PC-9 (cell line): ENCODE measurements at regions of chr11 and their contacts with region 1.

Region 1: DNA sequence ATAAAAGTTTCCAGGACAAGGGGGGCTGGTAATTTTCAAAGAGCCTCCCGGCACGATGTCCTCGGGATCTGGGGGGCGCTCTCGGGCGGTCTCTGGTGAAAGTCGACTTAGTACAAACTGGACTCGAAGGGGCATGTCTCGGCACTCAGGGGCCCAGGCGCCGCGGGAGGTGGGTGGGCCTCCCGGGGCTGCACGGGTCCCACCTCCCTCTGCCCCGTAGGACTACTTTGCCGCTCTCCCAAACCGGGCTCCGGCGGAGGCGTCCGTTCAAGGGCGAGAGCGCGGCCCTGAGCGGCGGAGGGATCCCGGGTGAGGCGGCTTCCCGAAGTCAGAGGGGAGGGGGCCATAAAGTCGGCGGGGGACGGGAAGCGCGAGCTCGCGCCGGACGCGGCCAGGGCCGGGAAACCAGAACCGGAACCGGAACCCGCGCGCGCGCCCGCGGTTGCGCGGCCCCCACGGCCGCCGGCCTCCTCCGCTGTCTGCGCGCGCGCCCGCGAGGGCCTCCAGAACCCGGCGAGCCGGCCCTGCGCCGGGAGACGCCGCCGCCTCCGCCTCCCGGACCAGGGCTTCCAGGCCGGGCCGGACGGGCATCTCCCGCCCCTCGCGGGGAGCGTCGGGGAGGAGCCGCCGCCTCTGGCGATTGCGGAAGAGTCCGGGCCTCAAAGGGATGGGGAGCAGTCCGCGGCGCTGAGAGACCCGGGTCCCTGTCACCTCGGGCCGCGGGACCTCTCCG is at the start of gene ARHGEF12:
- DNase-seq: peak; percentile 85 to 88
- H3K4me3 ChIP-seq: peak within 1 kb of the TSS; percentile 90
- H3K27ac ChIP-seq: peak within 1 kb of the TSS; percentile 50
- H3K4me1 ChIP-seq: peaks cover 76% of the 10 kb centered on the region
- H3K27me3 ChIP-seq: no peaks in the 10 kb centered on the region
- CTCF ChIP-seq: peak; percentile 44; the same call in 1 of the 2 replicates
- total RNA-seq, gene ARHGEF12: 61.5 and 76.5 TPM in 2 replicates

Region 2: GRCh38 chr11:119902656-119903231 is 433.3 kb before region 1 on chr11:
- CTCF ChIA-PET with region 1: no interaction called
- POLR2A ChIA-PET with region 1: no interaction called
- intact Hi-C with region 1: no loop called
- DNase-seq: no peak
- H3K4me3 ChIP-seq: no peak overlapping the region
- H3K27ac ChIP-seq: no peak overlapping the region
- H3K4me1 ChIP-seq: peaks cover 33% of the 10 kb centered on the region
- H3K27me3 ChIP-seq: no peaks in the 10 kb centered on the region
- CTCF ChIP-seq: no peak

Region 3: DNA sequence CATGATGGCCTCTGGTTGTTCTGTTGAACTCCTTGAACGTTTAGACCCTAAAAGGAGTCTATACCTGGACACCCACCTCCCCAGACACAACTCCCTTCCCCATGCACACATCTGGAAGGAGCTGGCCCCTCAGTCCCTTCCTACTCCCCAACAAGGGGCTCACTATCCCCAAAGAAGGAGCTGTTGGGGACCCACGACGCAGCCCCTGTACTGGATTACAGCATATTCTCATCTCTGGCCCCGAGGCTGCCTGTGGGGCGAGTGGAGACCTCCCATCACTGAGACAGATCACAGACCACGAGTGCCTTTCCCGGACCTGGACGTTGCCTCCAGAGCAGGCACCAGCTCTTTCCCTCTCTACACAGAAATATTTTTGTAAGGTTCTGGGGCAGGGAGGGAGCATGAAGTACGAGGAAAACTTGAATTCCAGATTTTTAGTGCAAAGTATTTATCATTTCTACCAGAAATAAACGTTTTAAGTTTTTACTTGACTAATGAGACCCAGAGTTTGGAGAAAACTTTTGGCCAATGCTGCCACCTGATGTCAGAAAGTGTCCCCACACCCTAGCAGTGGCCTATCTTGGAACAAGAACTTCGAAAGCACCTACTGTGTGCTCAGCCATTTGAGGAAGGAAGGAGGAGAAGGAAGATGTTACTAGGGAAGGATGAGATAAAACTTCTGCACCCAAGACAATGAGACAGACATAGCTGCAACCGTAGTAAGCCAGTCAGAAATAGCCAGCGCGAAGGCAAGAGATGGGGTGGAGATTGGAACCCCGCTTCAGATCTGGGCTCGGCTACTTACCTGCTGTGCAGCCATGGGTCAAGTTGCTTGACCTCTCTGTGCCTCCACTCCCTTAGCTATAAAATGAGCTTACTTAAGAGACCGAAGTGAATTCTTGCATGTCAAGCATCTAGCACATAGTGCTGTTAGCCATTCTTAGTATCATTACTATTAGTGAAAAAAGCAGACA is 106.3 kb before region 1 on chr11:
- CTCF ChIA-PET with region 1: no interaction called
- POLR2A ChIA-PET with region 1: no interaction called
- intact Hi-C with region 1: no loop called
- DNase-seq: no peak
- H3K4me3 ChIP-seq: no peak overlapping the region
- H3K27ac ChIP-seq: no peak overlapping the region
- H3K4me1 ChIP-seq: no peaks in the 10 kb centered on the region
- H3K27me3 ChIP-seq: no peaks in the 10 kb centered on the region
- CTCF ChIP-seq: peak; percentile 89

Region 4: DNA sequence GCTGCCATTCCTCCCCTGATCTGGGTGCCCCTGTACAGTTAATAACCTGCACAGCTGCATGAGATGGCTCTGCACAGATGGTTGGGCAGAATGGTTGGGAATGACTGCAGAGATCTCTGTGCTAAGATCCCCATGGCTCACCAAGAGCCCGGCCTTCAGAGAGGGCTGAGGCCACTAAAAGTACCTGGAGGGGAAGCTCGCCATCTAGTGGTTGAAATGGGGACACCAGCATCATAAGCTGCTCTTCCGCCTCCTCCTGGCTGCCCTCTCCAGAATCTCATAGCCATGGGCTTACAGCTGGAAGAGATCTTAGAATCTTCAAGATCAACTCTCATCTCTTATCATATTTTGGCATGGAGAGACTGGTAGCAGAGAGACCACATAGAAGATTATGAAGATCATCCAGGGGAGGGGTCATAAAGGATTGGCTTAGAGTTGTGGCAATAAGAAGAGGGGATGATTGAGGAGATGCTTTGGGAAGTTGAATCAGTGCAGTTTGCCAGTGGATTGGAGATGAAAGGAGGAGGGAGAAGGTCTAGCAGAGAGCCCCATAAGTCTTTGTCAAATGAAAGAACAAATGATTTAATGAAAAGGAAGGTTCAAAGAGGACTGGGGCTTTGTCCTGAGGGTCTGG is 33.0 kb before region 1 on chr11:
- CTCF ChIA-PET with region 1: interaction called, 3 read pairs
- POLR2A ChIA-PET with region 1: no interaction called
- intact Hi-C with region 1: loop called (anchors 1 kb)
- DNase-seq: peak in 1 of 2 experiments; percentile 67
- H3K4me3 ChIP-seq: no peak overlapping the region
- H3K27ac ChIP-seq: peak overlapping the region; percentile 77
- H3K4me1 ChIP-seq: peaks cover 78% of the 10 kb centered on the region
- H3K27me3 ChIP-seq: no peaks in the 10 kb centered on the region
- CTCF ChIP-seq: peak; percentile 87

Region 5: DNA sequence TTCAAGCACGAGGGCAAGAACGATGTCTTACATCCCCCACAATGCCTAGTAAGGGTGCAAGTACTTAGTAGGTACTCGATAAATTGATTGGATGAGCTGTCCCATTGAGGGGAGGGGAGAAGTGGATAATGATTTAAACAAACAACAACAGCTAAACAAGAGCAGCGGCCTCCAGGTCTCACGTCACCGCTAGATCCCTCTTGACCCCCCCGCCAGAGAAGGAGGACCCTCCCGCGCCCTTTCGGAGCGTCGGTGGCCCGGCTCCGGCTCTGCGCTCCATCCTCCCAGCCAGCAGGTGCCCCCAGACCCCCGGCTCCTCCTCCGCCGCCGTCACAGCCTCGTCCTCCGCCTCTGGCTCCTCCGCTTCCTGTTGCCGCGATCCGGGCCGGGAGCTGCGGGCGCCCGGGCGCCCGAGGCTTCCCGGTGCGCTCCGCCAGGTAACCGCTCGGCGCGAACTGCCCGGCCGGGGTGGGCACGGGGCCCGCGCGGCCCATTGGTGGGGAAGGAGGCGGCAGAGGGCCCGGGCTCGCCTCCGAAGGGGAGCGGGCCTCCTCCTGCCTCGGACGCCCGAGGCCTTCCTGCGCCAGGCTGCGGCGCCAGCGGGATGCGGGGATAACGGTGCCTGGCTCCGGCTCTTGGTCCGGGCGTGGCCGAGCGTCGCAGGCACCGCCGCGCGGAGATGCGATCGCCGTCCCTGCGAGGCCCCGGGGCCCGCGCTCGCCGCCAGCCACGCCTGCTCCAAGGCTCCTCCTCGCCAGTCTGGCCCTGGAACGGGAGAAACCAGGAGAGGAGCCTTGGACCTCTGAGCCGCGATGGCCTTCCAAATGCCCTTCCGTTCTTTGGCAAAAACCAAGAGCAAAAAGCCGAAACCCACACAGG is 10.9 kb before region 1 on chr11 and contains the start of gene TLCD5:
- CTCF ChIA-PET with region 1: interaction called, 10 read pairs
- POLR2A ChIA-PET with region 1: no interaction called
- intact Hi-C with region 1: no loop called
- DNase-seq: peak; percentile 44 to 63
- H3K4me3 ChIP-seq: peak within 1 kb of the TSS; percentile 79
- H3K27ac ChIP-seq: no peak within 1 kb of the TSS
- H3K4me1 ChIP-seq: peaks cover 21% of the 10 kb centered on the region
- H3K27me3 ChIP-seq: no peaks in the 10 kb centered on the region
- CTCF ChIP-seq: no peak
- total RNA-seq, gene TLCD5: 6.0 and 7.7 TPM in 2 replicates

Region 6: DNA sequence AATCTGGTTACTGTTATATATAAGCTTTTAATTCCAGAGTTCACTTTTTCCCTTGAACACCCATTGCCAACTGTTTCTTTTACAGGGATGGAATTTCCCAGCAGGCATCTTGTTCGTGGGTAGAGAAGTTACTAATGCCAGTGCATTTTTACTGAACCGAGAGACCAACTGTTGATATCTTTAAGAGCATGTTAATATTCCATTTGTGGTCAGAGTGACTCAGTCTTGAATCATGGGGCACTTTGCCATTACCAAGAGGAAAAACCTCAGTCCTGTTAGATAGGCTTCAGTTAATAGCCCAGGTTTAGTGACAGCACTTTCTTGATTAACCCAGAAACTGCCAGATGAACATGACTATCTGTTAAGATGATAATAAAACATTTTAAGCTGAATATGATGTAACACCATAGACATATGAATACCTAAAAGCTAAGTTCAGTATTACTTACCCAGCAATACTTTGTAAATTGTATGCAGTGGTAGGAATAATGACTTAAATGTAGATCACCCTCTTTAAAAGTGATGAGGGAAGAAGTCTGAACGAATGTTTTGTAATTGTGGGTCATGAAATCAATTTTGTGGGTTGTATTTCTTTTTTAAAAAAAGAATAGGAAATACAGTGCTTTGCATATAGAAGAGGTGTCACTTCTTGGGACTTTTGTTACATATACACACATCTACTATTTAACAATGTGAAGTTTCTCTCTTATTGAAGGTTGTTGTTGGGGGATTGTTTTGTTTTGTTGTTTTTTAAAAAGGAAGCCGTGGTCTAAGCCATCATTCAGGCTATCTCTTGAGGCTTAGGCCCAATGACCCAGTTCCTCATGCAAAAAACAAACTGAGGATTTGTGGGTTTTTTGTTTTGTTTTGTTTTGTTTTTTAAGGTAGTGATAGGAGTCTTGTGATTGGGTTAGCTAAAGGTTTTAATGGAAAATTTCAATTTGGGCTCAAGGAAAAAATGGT is 96.3 kb after region 1 on chr11:
- CTCF ChIA-PET with region 1: no interaction called
- POLR2A ChIA-PET with region 1: interaction called, 4 read pairs
- intact Hi-C with region 1: loop called (anchors 2 kb)
- DNase-seq: peak; percentile 60 to 98
- H3K4me3 ChIP-seq: no peak overlapping the region
- H3K27ac ChIP-seq: peak overlapping the region; percentile 47
- H3K4me1 ChIP-seq: peaks cover 19% of the 10 kb centered on the region
- H3K27me3 ChIP-seq: no peaks in the 10 kb centered on the region
- CTCF ChIP-seq: no peak

Region 7: DNA sequence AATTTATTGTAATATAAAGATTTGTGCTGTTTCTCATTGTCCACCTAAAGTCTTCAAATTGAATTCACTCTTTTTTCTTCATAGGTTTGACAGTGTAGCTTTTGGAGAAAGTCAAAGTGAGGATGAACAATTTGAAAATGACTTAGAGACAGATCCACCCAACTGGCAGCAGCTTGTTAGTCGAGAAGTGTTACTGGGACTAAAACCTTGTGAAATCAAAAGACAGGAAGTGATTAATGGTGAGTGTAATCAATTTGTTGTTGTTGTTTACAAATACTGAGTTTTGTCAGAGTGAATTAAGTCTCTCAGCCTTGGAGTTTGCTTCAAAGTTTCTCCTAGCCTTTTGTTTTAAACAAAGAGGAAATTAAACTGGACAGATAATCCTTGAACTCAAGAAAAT is 121.9 kb after region 1 on chr11:
- CTCF ChIA-PET with region 1: no interaction called
- POLR2A ChIA-PET with region 1: interaction called, 10 read pairs
- intact Hi-C with region 1: no loop called
- DNase-seq: no peak
- H3K4me3 ChIP-seq: no peak overlapping the region
- H3K27ac ChIP-seq: 0 out of 2 replicates have a peak overlapping the region, but pooled peaks have one; percentile 7
- H3K4me1 ChIP-seq: no peaks in the 10 kb centered on the region
- H3K27me3 ChIP-seq: no peaks in the 10 kb centered on the region
- CTCF ChIP-seq: no peak